WTC11 (cell line): ENCODE measurements at regions of chr15 and their contacts with region 1.

Region 1: GRCh38 chr15:51227940-51228783 is 110.2 kb downstream of the CYP19A1 start:
- DNase-seq: no peak
- ATAC-seq: peak; percentile 42
- H3K4me3 Mint-ChIP-seq: no peak overlapping the region
- H3K27ac Mint-ChIP-seq: peak overlapping the region; percentile 2
- H3K4me1 Mint-ChIP-seq: peaks cover 10% of the 10 kb centered on the region
- H3K27me3 Mint-ChIP-seq: no peaks in the 10 kb centered on the region
- CTCF ChIP-seq: no peak

Region 2: GRCh38 chr15:51192521-51193280 is 35.5 kb before region 1 on chr15:
- CTCF ChIA-PET with region 1: interaction called, 10 read pairs
- POLR2A ChIA-PET with region 1: no interaction called
- DNase-seq: peak; percentile 98
- ATAC-seq: peak; percentile 97
- H3K4me3 Mint-ChIP-seq: no peak overlapping the region
- H3K27ac Mint-ChIP-seq: no peak overlapping the region
- H3K4me1 Mint-ChIP-seq: peaks cover 20% of the 10 kb centered on the region
- H3K27me3 Mint-ChIP-seq: no peaks in the 10 kb centered on the region; the same call in 1 of the 2 replicates
- CTCF ChIP-seq: peak; percentile 96

Region 3: DNA sequence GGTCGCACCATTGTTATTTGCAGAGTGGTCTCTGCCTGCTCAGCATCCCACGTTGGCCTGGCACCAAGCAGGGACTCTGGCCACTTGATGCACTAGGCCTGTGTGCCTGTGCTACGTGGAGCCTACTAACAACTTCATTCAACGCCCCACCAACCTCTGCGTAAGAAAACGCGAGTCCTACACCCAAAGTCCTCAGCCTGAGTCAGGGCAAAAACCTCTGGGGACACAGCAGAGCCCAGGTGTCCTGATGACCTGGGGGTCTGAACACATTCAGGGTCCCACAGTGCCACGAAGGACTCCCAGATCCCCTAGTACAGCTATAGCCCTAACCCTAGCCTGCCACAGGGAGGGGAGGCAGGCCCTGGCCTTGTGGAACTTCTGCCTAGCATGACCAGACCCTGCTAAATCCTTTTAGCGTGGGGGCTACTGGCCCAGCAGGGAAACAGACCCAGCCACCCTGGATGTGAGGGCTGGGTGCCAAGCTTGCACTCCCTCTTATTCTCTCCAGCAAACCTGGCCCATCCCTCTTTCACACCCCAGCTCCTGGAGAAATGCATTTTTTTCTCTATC is 18.3 kb after region 1 on chr15:
- CTCF ChIA-PET with region 1: interaction called, 10 read pairs
- POLR2A ChIA-PET with region 1: no interaction called
- DNase-seq: no peak
- ATAC-seq: no peak
- H3K4me3 Mint-ChIP-seq: no peak overlapping the region
- H3K27ac Mint-ChIP-seq: no peak overlapping the region
- H3K4me1 Mint-ChIP-seq: peaks cover 3% of the 10 kb centered on the region
- H3K27me3 Mint-ChIP-seq: peaks cover 2% of the 10 kb centered on the region; the same call in 1 of the 2 replicates
- CTCF ChIP-seq: no peak

Region 4: GRCh38 chr15:51286791-51287190 is 58.6 kb after region 1 on chr15:
- CTCF ChIA-PET with region 1: interaction called, 21 read pairs
- POLR2A ChIA-PET with region 1: no interaction called
- DNase-seq: no peak
- ATAC-seq: peak; percentile 74
- H3K4me3 Mint-ChIP-seq: no peak overlapping the region
- H3K27ac Mint-ChIP-seq: no peak overlapping the region
- H3K4me1 Mint-ChIP-seq: no peaks in the 10 kb centered on the region
- H3K27me3 Mint-ChIP-seq: no peaks in the 10 kb centered on the region; the same call in 1 of the 2 replicates
- CTCF ChIP-seq: no peak